AG04449 (cell line): ENCODE measurements at regions of chr15 and their contacts with region 1.

Region 1: DNA sequence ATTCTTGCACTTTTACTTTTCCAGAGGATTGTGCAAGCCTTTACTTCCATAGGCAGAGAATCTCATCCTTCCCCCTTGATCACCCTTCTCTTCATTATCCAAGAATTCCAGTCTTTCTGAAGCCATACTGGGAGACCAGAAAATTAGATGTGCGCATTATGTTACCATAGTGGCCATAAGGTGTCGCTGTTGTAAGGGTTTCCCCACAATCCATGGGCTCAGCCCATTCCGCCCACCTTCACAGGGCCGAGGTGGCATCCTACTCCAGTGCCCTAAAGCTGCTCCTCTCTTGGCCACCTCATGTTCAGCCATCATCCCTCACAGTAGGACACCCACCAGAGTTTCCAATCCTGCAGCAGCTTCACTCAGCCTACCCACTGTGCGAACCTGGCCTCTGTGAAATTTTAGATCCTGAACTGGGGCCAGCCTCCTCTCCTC is 35.0 kb downstream of the CTSH start:
- DNase-seq: no peak
- H3K4me3 ChIP-seq: no peak overlapping the region
- CTCF ChIP-seq: peak; percentile 59

Region 2: DNA sequence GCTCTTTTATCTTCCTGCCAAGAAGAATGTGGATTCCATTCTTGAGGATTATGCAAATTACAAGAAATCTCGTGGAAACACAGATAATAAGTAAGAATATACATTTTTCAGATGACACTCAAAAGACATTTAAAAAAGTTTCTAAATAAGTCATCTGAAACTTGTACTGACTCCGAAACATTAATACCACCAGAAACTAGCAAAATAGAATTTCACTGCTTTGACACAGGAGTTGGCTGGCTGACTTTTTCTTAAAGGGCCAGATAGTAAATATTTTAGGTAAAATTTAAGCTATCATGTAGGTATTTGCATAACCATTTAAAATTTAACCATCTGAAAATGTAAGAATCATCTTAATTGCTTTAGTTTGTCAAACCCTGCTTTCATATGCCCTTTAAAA is 16.3 kb before region 1 on chr15:
- CTCF ChIA-PET with region 1: interaction called, 12 read pairs
- POLR2A ChIA-PET with region 1: interaction called, 4 read pairs
- DNase-seq: no peak
- H3K4me3 ChIP-seq: no peak overlapping the region
- CTCF ChIP-seq: no peak

Region 3: DNA sequence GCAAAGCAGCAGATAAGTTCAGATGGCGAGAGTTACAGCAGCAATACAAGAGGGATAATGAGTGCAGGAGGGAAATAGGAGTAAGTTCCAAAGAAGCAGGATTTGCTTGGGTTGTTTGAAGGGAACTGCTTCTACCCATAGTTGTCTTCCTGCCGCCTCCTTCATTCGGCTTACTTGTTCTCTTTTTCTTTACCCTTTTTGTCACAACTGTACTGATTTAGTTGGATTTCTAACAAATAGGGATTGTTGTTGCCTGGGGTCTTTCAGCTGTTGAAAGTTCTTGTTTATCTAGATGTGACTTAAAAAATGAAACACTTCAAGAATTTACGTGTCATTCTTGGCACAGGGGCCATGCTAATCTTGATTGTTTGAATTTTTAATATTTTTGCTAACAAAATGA is 11.3 kb before region 1 on chr15:
- CTCF ChIA-PET with region 1: interaction called, 12 read pairs
- POLR2A ChIA-PET with region 1: interaction called, 4 read pairs
- DNase-seq: no peak
- H3K4me3 ChIP-seq: no peak overlapping the region
- CTCF ChIP-seq: no peak

Region 4: GRCh38 chr15:78927077-78927784 is 17.4 kb after region 1 on chr15:
- CTCF ChIA-PET with region 1: interaction called, 51 read pairs
- POLR2A ChIA-PET with region 1: interaction called, 3 read pairs
- DNase-seq: no peak
- H3K4me3 ChIP-seq: no peak overlapping the region
- CTCF ChIP-seq: no peak

Region 5: DNA sequence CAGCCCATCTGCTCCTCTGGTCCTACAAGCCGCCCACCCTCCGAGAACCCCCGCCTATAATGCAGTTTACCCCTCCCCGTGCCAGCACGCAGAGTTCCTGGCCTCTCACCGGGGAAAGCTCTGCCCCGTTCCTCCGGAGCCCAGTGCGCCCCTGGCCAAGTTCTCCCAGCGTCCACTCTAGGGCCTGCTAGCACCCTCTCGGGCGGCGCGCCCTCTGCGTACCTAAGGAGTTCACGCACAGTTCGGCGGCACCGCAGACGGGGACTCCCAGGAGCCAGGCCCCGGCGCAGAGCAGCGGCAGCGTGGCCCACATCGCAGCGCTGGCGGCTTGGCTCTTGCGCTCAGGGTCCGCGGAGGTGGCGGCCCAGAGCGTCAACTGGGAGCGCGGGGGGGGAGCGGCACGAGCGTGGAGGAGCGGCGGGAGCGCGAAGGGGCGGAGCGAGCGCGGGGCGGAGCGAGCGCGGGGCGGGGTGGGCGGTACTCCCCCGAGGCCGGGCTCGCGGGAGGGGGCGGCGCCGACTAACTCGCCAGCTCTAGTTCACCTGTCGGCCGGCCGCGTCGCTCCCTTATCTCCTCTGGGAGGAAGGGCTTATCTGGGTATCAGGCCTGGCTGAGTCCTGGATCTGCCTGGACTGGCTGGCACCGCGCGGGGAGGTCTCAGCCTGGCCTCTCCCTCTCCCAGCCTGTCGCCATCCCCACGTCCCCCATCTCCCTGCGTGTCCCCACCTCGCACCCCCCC is 35.0 kb after region 1 on chr15 and contains the start of gene CTSH:
- CTCF ChIA-PET with region 1: no interaction called
- POLR2A ChIA-PET with region 1: no interaction called
- DNase-seq: no peak
- H3K4me3 ChIP-seq: peak within 1 kb of the TSS; percentile 47
- CTCF ChIP-seq: no peak

Region 6: GRCh38 chr15:78979456-78980320 is 69.9 kb after region 1 on chr15:
- CTCF ChIA-PET with region 1: interaction called, 25 read pairs
- POLR2A ChIA-PET with region 1: interaction called, 3 read pairs
- DNase-seq: no peak
- H3K4me3 ChIP-seq: no peak overlapping the region
- CTCF ChIP-seq: peak; percentile 65

Region 7: DNA sequence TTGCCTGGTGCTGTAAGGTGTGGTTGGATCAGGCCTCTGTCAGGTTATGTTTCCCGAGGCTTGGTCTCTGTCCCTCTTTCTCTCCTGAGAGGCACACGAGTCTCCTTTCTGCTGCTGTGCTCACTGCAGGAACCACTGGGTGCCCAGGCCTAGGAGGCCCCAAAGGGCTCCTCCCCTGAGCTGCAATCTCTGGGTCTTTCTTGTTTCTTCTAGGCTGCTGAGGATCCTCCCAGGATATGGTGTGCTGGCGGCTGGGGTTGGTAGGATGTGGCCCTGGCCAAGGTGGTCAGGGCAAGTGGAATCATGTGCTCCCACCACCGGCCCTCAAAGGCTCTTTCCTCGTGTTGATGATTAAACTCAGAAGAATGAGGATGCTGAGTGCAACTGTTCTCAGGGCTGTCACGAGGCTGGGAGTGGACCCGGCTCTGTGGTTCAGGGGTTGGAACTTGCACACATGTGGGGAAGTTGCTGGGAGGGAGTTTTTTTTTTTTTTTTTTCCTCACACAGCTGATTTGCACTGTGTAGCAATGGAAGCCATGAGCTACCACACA is 78.6 kb after region 1 on chr15:
- CTCF ChIA-PET with region 1: interaction called, 10 read pairs
- POLR2A ChIA-PET with region 1: no interaction called
- DNase-seq: peak; percentile 82
- H3K4me3 ChIP-seq: no peak overlapping the region
- CTCF ChIP-seq: no peak